ENCODE measurements at regions of chr4 and their contacts with region 1.

Region 1: DNA sequence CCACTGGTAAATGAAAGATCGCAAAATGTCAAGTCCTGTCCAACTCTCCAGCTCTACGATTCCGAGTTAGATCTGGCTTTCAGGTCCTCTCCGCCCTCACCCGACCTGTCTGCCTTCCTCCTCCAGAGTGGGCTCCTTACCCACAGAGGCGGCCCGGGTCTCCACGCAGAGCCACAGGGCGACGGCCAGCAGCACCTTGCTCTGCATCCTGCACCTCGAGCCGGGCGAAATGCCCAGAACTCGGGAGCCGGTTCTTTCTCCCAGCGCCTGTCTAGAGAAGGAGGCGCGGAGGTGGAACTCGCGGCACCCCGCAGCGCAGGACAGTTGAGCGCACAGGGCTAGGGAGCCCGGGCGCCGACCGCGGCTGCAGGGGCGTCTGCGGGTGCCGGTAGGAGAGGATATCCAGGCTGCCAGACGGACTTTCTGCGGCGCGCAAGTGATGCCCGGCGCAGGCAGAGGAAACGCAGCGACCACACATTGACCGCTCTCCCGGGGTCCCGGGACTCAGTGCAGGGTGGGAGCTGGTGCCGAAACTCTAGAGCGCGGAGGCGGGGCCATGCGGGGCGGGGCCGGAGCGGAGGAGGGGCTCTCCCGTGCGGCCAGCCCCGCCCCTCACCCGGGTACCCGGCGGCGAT is at the start of gene KDR:
- DNase-seq: peak; percentile 69 to 70
- ATAC-seq: peak; percentile 92 to 98 (median 96)
- H3K4me3 ChIP-seq: peak within 1 kb of the TSS; percentile 50 to 88 (median 66)
- H3K27ac ChIP-seq: peak within 1 kb of the TSS; percentile 53 to 91 (median 80)
- H3K4me1 ChIP-seq: peaks cover 0 to 22% (median 7%) of the 10 kb centered on the region in 9 donors
- H3K27me3 ChIP-seq: peaks cover 0 to 37% (median 14%) of the 10 kb centered on the region in 7 donors
- CTCF ChIP-seq: no peak
- total RNA-seq, gene KDR: 12.4 to 45.7 (median 25.3) TPM

Region 2: DNA sequence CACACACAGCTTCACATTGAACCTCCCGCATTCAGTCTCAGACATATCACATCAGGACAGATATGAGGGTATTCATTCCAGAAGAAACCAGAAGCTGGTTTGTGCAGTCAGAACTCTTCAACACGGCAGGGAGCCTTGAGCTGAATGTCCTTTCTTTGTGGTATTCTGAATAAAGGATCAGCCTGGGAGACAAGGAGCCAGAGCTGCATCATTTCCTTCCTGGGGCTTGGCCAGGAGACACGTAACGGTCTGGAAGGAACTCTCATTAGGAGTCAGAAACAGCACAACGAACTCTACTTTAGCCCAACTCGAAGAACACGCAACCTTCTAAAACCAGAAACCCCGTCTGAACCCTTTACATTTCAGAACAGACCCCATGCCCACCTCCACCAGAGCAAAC is 46.2 kb before region 1 on chr4:
- intact Hi-C with region 1: loop called in 1 of 10 experiments (anchors 5 kb)
- DNase-seq: peak; percentile 62 to 86
- ATAC-seq: peak; percentile 81 to 95 (median 92)
- H3K4me3 ChIP-seq: peak overlapping the region in 2 of 10 donors; percentile 3 to 25
- H3K27ac ChIP-seq: peak overlapping the region; percentile 52 to 85 (median 80)
- H3K4me1 ChIP-seq: peaks cover 0 to 53% (median 21%) of the 10 kb centered on the region in 9 donors
- H3K27me3 ChIP-seq: no peaks in the 10 kb centered on the region
- CTCF ChIP-seq: no peak

Region 3: GRCh38 chr4:55087009-55087929 is 37.9 kb before region 1 on chr4:
- intact Hi-C with region 1: loop called in 2 of 10 experiments (anchors 5 kb)
- DNase-seq: no peak
- ATAC-seq: peak in 2 of 8 donors; percentile 10 to 19
- H3K4me3 ChIP-seq: no peak overlapping the region
- H3K27ac ChIP-seq: peak overlapping the region in 3 of 10 donors; percentile 4 to 57 (median 29)
- H3K4me1 ChIP-seq: peaks cover 5 to 69% (median 39%) of the 10 kb centered on the region in 9 donors
- H3K27me3 ChIP-seq: no peaks in the 10 kb centered on the region
- CTCF ChIP-seq: no peak

Region 4: DNA sequence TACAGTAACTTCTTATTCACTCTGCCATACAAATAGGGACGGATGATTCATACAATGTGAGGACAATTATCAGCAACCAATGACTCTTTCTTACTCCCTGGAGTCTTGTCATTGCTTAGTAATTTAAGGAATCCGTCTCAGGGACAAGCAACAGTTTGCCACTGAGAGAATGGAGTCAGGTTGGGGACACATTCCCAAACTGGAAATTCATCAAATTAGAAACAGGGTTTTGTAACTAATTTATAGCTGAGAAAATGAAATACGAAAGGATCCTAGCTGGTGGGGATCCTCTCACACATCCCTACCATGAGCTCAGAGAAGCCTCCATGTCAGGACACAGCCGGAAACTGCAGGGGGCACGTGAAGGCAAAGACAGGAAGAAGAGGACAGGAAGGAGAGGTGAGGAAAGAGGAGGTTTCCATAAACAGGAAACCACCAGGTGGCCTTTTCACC is 50.6 kb after region 1 on chr4:
- intact Hi-C with region 1: loop called in 4 of 10 experiments (anchors 2 to 10 kb)
- DNase-seq: no peak
- ATAC-seq: peak in 1 of 8 donors; percentile 39
- H3K4me3 ChIP-seq: no peak overlapping the region
- H3K27ac ChIP-seq: peak overlapping the region in 6 of 10 donors; percentile 44 to 84 (median 53)
- H3K4me1 ChIP-seq: peaks cover 0 to 60% (median 16%) of the 10 kb centered on the region in 9 donors
- H3K27me3 ChIP-seq: no peaks in the 10 kb centered on the region
- CTCF ChIP-seq: no peak

Region 5: GRCh38 chr4:55184600-55185523 is 59.7 kb after region 1 on chr4:
- intact Hi-C with region 1: loop called in 2 of 10 experiments (anchors 5 to 10 kb)
- DNase-seq: no peak
- ATAC-seq: peak in 7 of 8 donors; percentile 22 to 65 (median 57)
- H3K4me3 ChIP-seq: no peak overlapping the region
- H3K27ac ChIP-seq: peak overlapping the region in 5 of 10 donors; percentile 3 to 68 (median 15)
- H3K4me1 ChIP-seq: peaks cover 0 to 60% (median 36%) of the 10 kb centered on the region in 9 donors
- H3K27me3 ChIP-seq: no peaks in the 10 kb centered on the region
- CTCF ChIP-seq: peak in 6 of 9 donors; percentile 17 to 47 (median 34)

Region 6: DNA sequence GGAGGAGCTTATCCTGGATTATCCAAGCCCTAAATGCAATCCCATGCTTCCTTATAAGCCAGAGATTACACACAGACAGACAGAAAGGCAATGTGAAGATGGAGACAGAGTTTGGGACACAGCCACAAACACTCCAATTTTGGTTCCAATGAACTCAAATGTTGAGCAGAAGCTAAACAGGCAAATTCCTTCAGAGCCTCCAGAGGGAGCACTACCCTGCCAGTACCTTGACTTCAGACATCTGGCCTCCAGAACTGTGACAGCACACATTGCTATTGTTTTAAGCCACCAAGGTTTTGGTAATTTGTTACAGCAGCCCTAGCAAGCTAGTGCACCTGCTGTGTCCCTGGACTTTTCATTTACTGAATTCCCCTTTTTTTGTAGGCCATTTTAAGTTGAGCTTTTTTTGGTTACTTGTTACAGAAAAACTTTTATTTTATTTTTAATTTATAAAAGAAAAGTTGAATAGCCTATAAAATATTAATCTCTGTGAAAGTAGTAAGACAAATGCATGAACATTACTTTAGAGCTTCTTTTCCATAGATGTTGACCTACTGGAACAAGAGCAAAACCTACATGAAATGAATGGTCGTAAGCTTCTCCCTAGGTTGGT is 187.4 kb after region 1 on chr4:
- intact Hi-C with region 1: loop called in 1 of 10 experiments (anchors 10 kb)
- DNase-seq: peak in 1 of 2 donors; percentile 59
- ATAC-seq: peak; percentile 22 to 89 (median 84)
- H3K4me3 ChIP-seq: no peak overlapping the region
- H3K27ac ChIP-seq: peak overlapping the region in 5 of 10 donors; percentile 4 to 38 (median 12)
- H3K4me1 ChIP-seq: peaks cover 0 to 13% (median 0%) of the 10 kb centered on the region in 9 donors
- H3K27me3 ChIP-seq: no peaks in the 10 kb centered on the region
- CTCF ChIP-seq: peak; percentile 23 to 80 (median 67)

Region 7: DNA sequence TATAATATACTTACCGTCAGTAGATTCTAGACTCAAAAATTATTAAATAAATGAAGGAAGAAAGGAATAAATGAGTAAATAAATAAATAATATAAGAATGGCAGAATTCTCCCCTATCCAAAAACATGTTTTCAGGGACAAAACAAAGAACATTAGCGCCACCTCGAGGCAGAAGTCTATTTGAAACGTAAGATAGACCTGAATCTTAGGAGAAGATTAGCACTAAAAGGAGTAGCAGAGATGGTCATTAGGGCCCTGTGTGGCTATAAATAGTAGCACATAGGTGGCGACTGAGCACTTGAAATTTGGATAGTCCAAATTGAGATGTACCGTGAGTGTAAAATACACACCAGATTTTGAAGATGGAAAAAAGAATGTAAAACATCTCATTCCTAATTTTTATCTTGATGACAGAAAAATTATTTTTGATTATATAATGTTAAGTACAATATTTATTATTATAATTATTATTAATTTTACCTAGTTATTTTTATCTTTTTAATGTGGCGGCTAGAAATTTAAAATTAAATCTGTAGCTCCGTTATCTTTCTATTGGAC is 196.6 kb after region 1 on chr4:
- intact Hi-C with region 1: loop called in 4 of 10 experiments (anchors 5 to 10 kb)
- DNase-seq: peak in 1 of 2 donors; percentile 88
- ATAC-seq: peak in 6 of 8 donors; percentile 17 to 69 (median 52)
- H3K4me3 ChIP-seq: no peak overlapping the region
- H3K27ac ChIP-seq: no peak overlapping the region
- H3K4me1 ChIP-seq: peaks cover 0 to 27% (median 13%) of the 10 kb centered on the region in 9 donors
- H3K27me3 ChIP-seq: no peaks in the 10 kb centered on the region
- CTCF ChIP-seq: peak; percentile 44 to 84 (median 68)